CD8-positive, alpha-beta T cell (primary cell): ENCODE measurements at regions of chr20 and their contacts with region 1.

Region 1: DNA sequence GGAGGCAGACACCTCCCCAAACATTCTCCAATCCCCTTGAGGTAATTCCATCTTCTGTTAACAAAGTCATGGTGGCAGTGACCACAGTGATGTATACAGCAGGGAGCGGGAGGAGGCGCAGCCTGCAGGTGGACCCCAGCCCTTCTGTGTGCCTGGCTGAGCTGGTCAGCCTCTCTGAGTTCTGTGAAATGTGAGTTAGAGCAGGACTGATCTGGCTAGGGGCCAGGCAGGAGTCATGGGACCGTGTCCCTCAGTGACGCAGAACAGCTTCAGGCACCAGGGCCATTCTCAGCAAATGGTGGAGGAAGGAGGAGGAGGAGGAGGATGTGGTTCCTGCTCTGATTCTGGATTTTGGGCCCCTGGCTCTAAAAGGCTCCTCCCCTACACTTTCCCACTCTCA is 6.9 kb downstream of the PHACTR3 start:
- DNase-seq: no peak
- ATAC-seq: no peak
- H3K4me3 ChIP-seq: no peak overlapping the region
- H3K4me3 Mint-ChIP-seq: no peak overlapping the region
- H3K27ac ChIP-seq: no peak overlapping the region
- H3K27ac Mint-ChIP-seq: no peak overlapping the region
- H3K4me1 ChIP-seq: no peaks in the 10 kb centered on the region
- H3K4me1 Mint-ChIP-seq: no peaks in the 10 kb centered on the region
- H3K27me3 ChIP-seq: peaks cover 0 to 2% of the 10 kb centered on the region in 2 experiments
- H3K27me3 Mint-ChIP-seq: peaks cover 44% of the 10 kb centered on the region
- CTCF ChIP-seq: no peak

Region 2: GRCh38 chr20:59598625-59599310 is 12.5 kb before region 1 on chr20:
- CTCF ChIA-PET with region 1: interaction called, 15 read pairs
- POLR2A ChIA-PET with region 1: no interaction called
- intact Hi-C with region 1: no loop called
- DNase-seq: peak in 4 of 9 experiments; percentile 27 to 44 (median 32)
- ATAC-seq: no peak
- H3K4me3 ChIP-seq: no peak overlapping the region
- H3K4me3 Mint-ChIP-seq: no peak overlapping the region
- H3K27ac ChIP-seq: no peak overlapping the region
- H3K27ac Mint-ChIP-seq: no peak overlapping the region
- H3K4me1 ChIP-seq: no peaks in the 10 kb centered on the region
- H3K4me1 Mint-ChIP-seq: peaks cover 2% of the 10 kb centered on the region
- H3K27me3 ChIP-seq: no peaks in the 10 kb centered on the region
- H3K27me3 Mint-ChIP-seq: peaks cover 47% of the 10 kb centered on the region
- CTCF ChIP-seq: peak; percentile 68

Region 3: DNA sequence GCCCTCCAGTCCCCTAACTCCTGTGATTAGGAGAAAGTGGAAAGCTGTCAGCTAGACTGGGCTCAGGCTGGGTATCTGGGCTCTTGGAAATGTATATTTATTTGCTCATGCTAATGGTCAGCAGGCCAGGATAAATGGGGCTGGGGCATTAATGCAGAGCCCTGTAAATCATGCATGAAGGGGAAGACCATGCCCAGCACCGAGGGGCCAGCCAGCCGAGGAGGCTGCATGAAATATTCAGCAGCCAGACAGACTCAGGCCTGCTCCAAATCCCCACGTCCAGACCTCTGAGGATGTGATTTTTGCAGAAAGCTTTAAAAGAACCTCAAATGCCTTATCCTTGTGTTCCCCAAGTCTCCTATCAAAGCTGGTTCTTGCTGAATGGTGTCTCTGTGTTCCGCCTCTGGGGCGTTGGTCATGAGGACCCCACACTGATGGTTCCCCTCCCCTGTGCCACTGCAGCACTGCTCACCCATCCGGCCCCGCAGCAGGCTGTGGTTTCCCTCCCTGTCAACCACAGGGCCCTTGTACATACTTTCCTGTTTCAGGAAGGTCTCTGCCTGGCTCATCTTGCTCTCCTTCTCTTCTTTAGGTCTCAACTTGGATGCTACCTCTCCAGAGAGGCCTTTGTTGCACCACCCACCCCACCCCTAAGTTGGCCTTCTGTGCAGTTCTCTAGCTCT is 705.3 kb after region 1 on chr20:
- CTCF ChIA-PET with region 1: no interaction called
- POLR2A ChIA-PET with region 1: no interaction called
- intact Hi-C with region 1: no loop called
- DNase-seq: no peak
- ATAC-seq: no peak
- H3K4me3 ChIP-seq: no peak overlapping the region
- H3K4me3 Mint-ChIP-seq: no peak overlapping the region
- H3K27ac ChIP-seq: no peak overlapping the region
- H3K27ac Mint-ChIP-seq: no peak overlapping the region
- H3K4me1 ChIP-seq: no peaks in the 10 kb centered on the region
- H3K4me1 Mint-ChIP-seq: no peaks in the 10 kb centered on the region
- H3K27me3 ChIP-seq: no peaks in the 10 kb centered on the region
- H3K27me3 Mint-ChIP-seq: peaks cover 3% of the 10 kb centered on the region
- CTCF ChIP-seq: no peak